ENCODE measurements at regions of chr17 and their contacts with region 1.

Region 1: DNA sequence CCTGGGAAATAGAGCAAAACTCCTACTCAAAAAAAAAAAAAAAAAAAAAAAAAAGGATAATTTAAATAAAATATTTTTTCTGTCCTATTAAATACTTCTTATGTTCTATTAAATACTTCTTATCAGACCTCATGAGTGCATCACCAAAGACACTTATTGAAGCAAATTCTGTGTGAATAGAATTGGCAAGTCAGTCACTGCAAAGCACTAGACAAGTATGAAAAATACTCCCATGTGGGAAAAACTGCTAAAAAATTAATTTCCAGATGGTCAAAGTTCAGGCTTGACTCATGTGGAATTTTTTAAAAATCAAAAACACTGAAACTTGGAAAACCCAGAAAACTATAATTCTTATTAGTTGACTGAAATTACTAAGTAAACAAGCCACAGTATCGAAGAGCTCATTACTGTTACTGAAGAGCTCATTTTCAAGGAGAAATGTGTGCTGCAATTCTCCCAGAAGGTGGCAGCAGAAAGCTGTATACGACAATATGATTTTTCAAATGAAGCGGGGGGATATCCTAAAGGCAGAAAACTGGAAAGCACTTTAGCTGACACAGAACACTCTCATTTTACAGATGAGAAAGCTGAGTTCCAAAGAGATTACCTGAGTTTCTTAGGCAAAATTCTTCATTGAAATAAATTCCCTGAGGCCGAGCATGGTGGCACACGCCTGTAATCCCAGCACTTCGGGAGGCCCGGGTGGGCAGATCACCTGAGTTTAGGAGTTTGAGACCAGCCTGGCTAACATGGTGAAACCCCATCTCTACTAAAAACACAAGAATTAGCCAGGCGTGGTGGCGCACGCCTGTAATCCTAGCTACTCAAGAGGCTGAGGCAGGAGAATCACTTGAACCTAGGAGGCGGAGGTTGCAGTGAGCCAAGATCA is 15.9 kb upstream of the FBXO47 start:
- DNase-seq: no peak
- H3K4me3 ChIP-seq: no peak overlapping the region
- H3K27ac ChIP-seq: peak overlapping the region in 1 of 2 donors; percentile 20
- H3K4me1 ChIP-seq: no peaks in the 10 kb centered on the region
- H3K27me3 ChIP-seq: no peaks in the 10 kb centered on the region
- CTCF ChIP-seq: peak; percentile 49 to 77 (median 76)
- POLR2A ChIP-seq: no peak

Region 2: GRCh38 chr17:39153599-39154051 is 170.5 kb after region 1 on chr17:
- intact Hi-C with region 1: loop called (anchors 5 kb)
- DNase-seq: peak; percentile 94 to 97
- H3K4me3 ChIP-seq: peak overlapping the region; percentile 77 to 96 (median 88)
- H3K27ac ChIP-seq: peak overlapping the region; percentile 96 to 99
- H3K4me1 ChIP-seq: peaks cover 0 to 4% of the 10 kb centered on the region in 2 donors
- H3K27me3 ChIP-seq: no peaks in the 10 kb centered on the region
- CTCF ChIP-seq: peak in 2 of 3 donors; percentile 37 to 51
- POLR2A ChIP-seq: no peak

Measured in breast epithelium (tissue), 4 donors.